ENCODE measurements at regions of chr1 and their contacts with region 1.

Region 1: GRCh38 chr1:40722636-40723035 is 31.1 kb downstream of the NFYC start:
- DNase-seq: no peak
- H3K4me3 ChIP-seq: no peak overlapping the region
- H3K27ac ChIP-seq: peak overlapping the region; percentile 31
- H3K4me1 ChIP-seq: peaks cover 16% of the 10 kb centered on the region
- H3K27me3 ChIP-seq: no peaks in the 10 kb centered on the region
- CTCF ChIP-seq: no peak

Region 2: GRCh38 chr1:40110389-40110788 is 612.2 kb before region 1 on chr1:
- CTCF ChIA-PET with region 1: no interaction called
- POLR2A ChIA-PET with region 1: no interaction called
- intact Hi-C with region 1: no loop called
- DNase-seq: no peak
- H3K4me3 ChIP-seq: no peak overlapping the region
- H3K27ac ChIP-seq: no peak overlapping the region
- H3K4me1 ChIP-seq: peaks cover 47% of the 10 kb centered on the region
- H3K27me3 ChIP-seq: no peaks in the 10 kb centered on the region
- CTCF ChIP-seq: no peak

Region 3: DNA sequence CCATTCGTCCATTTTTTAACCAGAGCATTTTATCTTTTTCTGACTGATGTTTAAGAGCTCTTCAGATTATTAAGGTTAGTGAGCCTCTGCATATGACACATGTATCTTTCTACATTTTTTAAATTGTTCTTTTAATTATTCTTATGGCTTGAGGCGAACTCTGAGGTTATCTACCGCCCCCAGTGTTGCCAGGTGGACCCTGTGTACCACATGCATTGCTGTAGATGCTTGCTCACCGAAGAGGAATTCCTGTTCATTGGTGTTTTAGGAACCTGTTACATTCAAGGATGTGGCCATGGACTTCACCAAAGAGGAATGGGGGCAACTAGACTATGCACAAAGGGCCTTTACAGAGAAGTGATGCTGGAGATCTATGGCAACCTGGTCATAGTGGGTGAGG is 159.4 kb before region 1 on chr1:
- CTCF ChIA-PET with region 1: no interaction called
- POLR2A ChIA-PET with region 1: interaction called, 14 read pairs
- intact Hi-C with region 1: no loop called
- DNase-seq: no peak
- H3K4me3 ChIP-seq: no peak overlapping the region
- H3K27ac ChIP-seq: no peak overlapping the region
- H3K4me1 ChIP-seq: no peaks in the 10 kb centered on the region
- H3K27me3 ChIP-seq: no peaks in the 10 kb centered on the region
- CTCF ChIP-seq: no peak

Region 4: GRCh38 chr1:41222496-41222895 is 499.9 kb after region 1 on chr1:
- CTCF ChIA-PET with region 1: no interaction called
- POLR2A ChIA-PET with region 1: no interaction called
- intact Hi-C with region 1: no loop called
- DNase-seq: no peak
- H3K4me3 ChIP-seq: no peak overlapping the region
- H3K27ac ChIP-seq: no peak overlapping the region
- H3K4me1 ChIP-seq: no peaks in the 10 kb centered on the region
- H3K27me3 ChIP-seq: no peaks in the 10 kb centered on the region
- CTCF ChIP-seq: no peak

Measured in PC-9 (cell line).